ENCODE measurements at regions of chr13 and their contacts with region 1.

Region 1: GRCh38 chr13:37288057-37288720 is 182.7 kb upstream of the CSNK1A1L start:
- DNase-seq: peak; percentile 93
- H3K4me3 ChIP-seq: no peak overlapping the region
- H3K27ac ChIP-seq: peak overlapping the region; percentile 42
- H3K4me1 ChIP-seq: peaks cover 21% of the 10 kb centered on the region
- H3K27me3 ChIP-seq: no peaks in the 10 kb centered on the region
- CTCF ChIP-seq: no peak
- POLR2A ChIP-seq: no peak

Region 2: DNA sequence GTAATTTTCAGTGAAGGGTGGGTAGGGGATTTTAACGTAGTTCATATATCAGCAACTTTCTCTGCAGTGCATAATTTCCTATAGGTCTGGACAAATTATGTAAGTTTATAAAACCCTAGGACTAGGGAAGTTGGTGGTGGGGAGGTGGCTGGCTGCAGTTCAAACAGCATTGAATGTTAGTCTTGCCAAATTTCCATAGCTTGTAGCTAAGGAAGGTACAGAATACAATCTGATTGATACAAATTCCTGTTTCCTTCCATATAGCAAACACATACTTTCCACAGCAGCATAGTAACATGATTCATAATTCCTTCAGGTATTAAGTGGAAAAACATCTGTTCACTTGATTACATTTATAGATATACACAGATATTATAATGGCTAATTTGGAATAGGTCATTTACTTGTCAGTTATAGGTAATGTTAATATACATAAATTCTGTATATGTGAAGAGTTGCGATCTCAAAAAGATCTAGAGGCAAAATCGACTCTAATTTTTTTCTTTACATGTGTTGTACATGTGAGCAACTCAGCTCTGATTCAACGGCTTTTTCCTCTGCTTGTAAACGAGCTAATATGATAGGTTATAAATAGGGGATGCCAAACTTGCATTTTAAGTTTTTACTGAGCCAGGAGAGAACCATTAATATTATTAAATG is 50.7 kb after region 1 on chr13:
- CTCF ChIA-PET with region 1: no interaction called
- POLR2A ChIA-PET with region 1: no interaction called
- dilution Hi-C with region 1: no loop called
- intact Hi-C with region 1: loop called (anchors 2 kb)
- DNase-seq: peak; percentile 91
- H3K4me3 ChIP-seq: no peak overlapping the region
- H3K27ac ChIP-seq: no peak overlapping the region
- H3K4me1 ChIP-seq: no peaks in the 10 kb centered on the region
- H3K27me3 ChIP-seq: no peaks in the 10 kb centered on the region
- CTCF ChIP-seq: no peak
- POLR2A ChIP-seq: no peak

Region 3: DNA sequence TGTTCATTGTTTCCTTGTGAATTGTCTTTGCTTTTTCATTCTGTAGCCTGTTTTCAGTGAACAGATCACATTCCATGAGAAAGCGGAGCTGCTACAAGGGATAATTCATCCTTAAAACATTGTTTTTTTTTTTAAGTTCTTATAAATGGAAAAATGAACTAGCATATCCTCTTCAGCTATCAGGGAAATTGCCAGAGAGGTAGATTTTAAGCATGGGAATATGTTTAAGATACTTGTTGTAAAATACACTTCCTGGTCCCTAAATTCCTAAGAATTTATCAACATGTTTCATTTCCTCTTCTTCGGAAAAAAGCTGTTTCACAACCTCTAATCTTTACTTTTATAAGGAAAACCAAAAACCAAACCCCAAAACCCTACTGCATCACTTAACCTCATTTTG is 72.4 kb after region 1 on chr13:
- CTCF ChIA-PET with region 1: no interaction called
- POLR2A ChIA-PET with region 1: no interaction called
- dilution Hi-C with region 1: no loop called
- intact Hi-C with region 1: loop called (anchors 2 kb)
- DNase-seq: peak; percentile 66
- H3K4me3 ChIP-seq: peak overlapping the region in 1 of 3 experiments; percentile 53
- H3K27ac ChIP-seq: peak overlapping the region; percentile 58
- H3K4me1 ChIP-seq: peaks cover 18% of the 10 kb centered on the region
- H3K27me3 ChIP-seq: no peaks in the 10 kb centered on the region
- CTCF ChIP-seq: no peak
- POLR2A ChIP-seq: no peak